Heart right ventricle (tissue), 16 donors: ENCODE measurements at regions of chr3 and their contacts with region 1.

Region 1: GRCh38 chr3:74027121-74027520 is 402.4 kb upstream of the PDZRN3 start:
- DNase-seq: no peak
- ATAC-seq: no peak
- H3K4me3 ChIP-seq: no peak overlapping the region
- H3K27ac ChIP-seq: no peak overlapping the region
- H3K4me1 ChIP-seq: no peaks in the 10 kb centered on the region
- H3K27me3 ChIP-seq: no peaks in the 10 kb centered on the region
- CTCF ChIP-seq: no peak

Region 2: DNA sequence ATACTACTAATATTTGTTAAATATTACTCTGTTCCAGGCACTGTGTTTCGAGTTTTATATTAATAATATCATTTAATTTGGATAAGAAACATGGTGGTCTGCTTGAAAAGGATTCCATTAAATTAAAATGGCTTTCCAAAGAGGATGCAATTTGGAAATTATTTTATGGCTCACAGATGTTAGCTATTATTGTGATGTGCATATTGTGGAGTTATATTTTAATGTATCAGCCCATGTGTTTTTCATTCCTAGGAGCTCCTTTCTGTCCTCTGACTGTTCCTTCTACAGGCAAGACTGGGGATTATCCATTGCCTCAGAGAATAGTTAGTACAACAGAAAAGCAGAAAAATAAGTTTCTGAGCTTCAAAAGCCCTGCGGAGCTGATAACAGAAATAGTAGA is 25.7 kb before region 1 on chr3:
- intact Hi-C with region 1: loop called in 1 of 10 experiments (anchors 1 kb)
- DNase-seq: no peak
- ATAC-seq: no peak
- H3K4me3 ChIP-seq: no peak overlapping the region
- H3K27ac ChIP-seq: no peak overlapping the region
- H3K4me1 ChIP-seq: no peaks in the 10 kb centered on the region
- H3K27me3 ChIP-seq: no peaks in the 10 kb centered on the region
- CTCF ChIP-seq: no peak

Region 3: GRCh38 chr3:74139648-74140047 is 112.5 kb after region 1 on chr3:
- intact Hi-C with region 1: no loop called
- DNase-seq: no peak
- ATAC-seq: no peak
- H3K4me3 ChIP-seq: no peak overlapping the region
- H3K27ac ChIP-seq: no peak overlapping the region
- H3K4me1 ChIP-seq: no peaks in the 10 kb centered on the region
- H3K27me3 ChIP-seq: peaks cover 0 to 3% (median 0%) of the 10 kb centered on the region in 7 donors
- CTCF ChIP-seq: no peak